Calu3 (cell line): ENCODE measurements at regions of chr20 and their contacts with region 1.

Region 1: DNA sequence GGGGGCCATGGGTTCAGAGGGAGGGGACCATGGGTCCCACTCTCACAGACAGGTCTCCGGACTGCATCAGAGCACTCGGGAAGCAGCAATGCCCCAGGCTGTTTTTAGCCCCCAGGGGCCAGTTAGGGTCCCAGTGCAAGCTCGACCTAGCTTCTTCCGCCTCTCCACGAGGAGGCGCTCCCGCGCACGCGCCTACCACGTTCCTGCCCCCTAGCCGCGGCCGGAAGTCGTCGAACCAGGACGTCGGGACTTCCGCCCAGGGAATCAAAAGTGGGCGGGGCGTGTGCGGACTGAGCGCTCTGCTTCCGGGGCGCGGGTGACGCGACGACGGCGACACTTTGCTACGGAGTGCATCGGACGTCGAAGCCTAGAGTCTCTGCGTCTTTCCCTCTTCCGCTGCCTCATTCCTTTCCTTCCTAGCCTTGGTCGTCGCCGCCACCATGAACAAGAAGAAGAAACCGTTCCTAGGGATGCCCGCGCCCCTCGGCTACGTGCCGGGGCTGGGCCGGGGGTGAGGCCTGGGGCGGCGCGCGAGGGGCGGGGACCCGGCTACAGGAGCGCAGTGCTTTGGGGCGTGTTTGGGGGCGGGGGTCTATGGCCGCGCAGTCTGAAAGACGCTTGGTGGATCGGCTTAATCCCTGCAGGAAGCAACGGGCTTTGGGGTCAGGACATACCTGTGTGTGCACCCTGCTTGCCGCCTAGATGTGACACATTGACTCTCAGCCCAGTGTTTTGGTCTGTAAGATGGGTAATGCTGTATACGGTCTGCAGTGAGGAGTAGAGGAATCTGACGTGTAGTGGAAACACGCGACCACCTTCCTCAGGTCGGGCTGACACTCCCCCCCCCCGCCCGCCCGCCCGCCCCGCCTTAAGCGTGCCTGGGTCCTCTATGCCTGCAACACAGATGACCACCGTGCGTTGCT is at the start of gene PRPF6:
- DNase-seq: peak; percentile 99
- H3K4me3 Mint-ChIP-seq: peak within 1 kb of the TSS; percentile 81
- H3K27ac Mint-ChIP-seq: peak within 1 kb of the TSS; percentile 87
- H3K4me1 Mint-ChIP-seq: peaks cover 49% of the 10 kb centered on the region
- H3K27me3 Mint-ChIP-seq: no peaks in the 10 kb centered on the region
- CTCF ChIP-seq: peak; percentile 95
- total RNA-seq, gene PRPF6: 111 and 113 TPM in 2 replicates

Region 2: DNA sequence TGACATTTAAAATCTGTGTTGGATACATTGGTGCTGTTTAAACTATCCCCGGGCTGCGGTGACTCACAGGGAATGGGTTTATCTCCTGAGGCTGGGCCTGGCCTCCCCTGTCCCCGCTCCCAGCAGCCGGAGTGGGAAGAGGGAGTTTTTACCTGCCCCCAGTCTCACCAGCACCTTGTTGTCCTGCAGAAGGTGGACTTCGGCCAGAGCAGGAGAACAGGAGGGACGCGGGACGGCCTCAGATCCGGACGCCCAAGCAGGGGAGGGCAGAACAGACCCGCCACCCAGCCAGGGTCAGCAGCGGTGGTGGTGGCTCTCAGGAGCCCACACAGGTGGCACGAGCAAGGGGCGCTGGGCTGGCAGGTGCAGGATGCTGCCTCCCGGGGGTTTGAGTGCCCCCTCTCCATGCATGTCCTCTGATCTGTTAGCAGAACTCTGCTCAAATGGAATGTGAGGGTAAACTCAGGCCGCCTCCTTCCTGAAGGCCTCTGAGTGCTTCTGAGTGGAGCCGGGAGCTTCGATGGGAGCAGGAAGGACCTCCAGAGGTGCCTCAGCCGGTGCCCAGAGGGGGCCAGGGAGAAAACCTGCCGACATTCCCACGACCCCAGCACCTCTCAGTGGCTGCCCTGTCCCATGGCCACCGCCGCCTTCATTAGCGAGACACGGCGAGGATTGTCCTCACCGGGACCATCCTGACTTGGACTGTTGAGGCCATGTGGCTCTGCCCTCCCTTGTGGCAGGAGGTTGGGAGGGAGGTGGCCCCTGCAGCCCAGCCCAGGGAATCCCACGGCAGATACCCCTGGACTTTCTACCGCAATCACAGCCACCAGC is 1228.2 kb before region 1 on chr20:
- CTCF ChIA-PET with region 1: no interaction called
- intact Hi-C with region 1: no loop called
- DNase-seq: no peak
- H3K4me3 Mint-ChIP-seq: no peak overlapping the region
- H3K27ac Mint-ChIP-seq: no peak overlapping the region
- H3K4me1 Mint-ChIP-seq: peaks cover 3% of the 10 kb centered on the region
- H3K27me3 Mint-ChIP-seq: peaks cover 65% of the 10 kb centered on the region
- CTCF ChIP-seq: no peak

Region 3: DNA sequence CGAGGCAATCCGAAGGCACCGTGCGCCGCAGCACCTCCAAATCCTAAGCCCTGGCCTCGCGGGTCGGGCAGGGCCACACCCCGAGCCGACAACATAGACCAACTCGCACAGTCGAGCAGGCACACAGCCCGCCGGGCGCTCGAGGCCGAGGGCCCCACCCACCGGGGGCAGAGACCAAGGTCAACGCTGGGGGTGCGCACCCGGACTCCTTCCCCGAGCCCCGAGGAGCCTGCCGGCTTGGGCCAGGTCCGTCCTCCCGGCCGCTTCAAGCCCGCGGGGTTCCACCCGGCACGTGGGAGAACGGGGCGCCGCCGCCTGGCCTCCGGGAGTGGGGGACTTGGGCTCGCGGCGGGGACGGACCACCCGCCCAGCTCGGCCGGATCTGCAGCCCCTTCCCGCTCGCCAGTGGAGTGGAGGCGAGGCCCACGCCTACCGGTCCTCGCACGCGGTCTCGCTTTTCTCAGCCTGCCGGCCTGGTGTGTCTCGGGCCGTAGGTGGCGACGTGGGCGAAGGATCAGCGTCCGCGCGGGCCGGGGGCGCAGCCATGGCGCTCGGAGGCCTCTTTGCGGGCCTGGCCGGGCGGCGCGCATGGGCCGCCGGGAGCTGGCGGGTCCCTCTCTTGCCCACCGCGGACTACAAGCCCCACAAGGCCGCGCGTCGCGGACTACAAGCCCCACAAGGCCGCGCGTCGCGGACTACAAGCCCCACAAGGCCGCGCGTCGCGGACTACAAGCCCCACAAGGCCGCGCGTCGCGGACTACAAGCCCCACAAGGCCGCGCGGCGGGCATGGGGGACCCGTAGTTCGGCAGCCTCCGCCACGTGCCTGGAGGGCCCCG is 25.0 kb before region 1 on chr20 and contains the start of gene UCKL1:
- CTCF ChIA-PET with region 1: interaction called, 17 read pairs
- intact Hi-C with region 1: no loop called
- DNase-seq: peak; percentile 98
- H3K4me3 Mint-ChIP-seq: peak within 1 kb of the TSS; percentile 85
- H3K27ac Mint-ChIP-seq: peak within 1 kb of the TSS; percentile 77
- H3K4me1 Mint-ChIP-seq: peaks cover 23% of the 10 kb centered on the region
- H3K27me3 Mint-ChIP-seq: no peaks in the 10 kb centered on the region
- CTCF ChIP-seq: no peak
- total RNA-seq, gene UCKL1: 85.1 and 86.3 TPM in 2 replicates

Region 4: GRCh38 chr20:63969838-63970713 is 11.0 kb before region 1 on chr20 and contains the start of gene ZNF512B:
- CTCF ChIA-PET with region 1: no interaction called
- intact Hi-C with region 1: no loop called
- DNase-seq: peak; percentile 90
- H3K4me3 Mint-ChIP-seq: peak within 1 kb of the TSS; percentile 80
- H3K27ac Mint-ChIP-seq: peak within 1 kb of the TSS; percentile 68
- H3K4me1 Mint-ChIP-seq: peaks cover 37% of the 10 kb centered on the region
- H3K27me3 Mint-ChIP-seq: no peaks in the 10 kb centered on the region
- CTCF ChIP-seq: no peak
- total RNA-seq, gene ZNF512B: 58.1 and 62.8 TPM in 2 replicates